MCF 10A (cell line): ENCODE measurements at regions of chr1 and their contacts with region 1.

Region 1: GRCh38 chr1:236281654-236282424 is at the start of gene ERO1B:
- DNase-seq: peak; percentile 100
- H3K4me3 Mint-ChIP-seq: peak within 1 kb of the TSS; percentile 80
- H3K27ac Mint-ChIP-seq: peak within 1 kb of the TSS; percentile 24
- H3K4me1 Mint-ChIP-seq: peaks cover 23% of the 10 kb centered on the region
- H3K27me3 Mint-ChIP-seq: peaks cover 26% of the 10 kb centered on the region
- CTCF ChIP-seq: no peak
- total RNA-seq, gene ERO1B: 9.6 and 17.2 TPM in 2 replicates

Region 2: DNA sequence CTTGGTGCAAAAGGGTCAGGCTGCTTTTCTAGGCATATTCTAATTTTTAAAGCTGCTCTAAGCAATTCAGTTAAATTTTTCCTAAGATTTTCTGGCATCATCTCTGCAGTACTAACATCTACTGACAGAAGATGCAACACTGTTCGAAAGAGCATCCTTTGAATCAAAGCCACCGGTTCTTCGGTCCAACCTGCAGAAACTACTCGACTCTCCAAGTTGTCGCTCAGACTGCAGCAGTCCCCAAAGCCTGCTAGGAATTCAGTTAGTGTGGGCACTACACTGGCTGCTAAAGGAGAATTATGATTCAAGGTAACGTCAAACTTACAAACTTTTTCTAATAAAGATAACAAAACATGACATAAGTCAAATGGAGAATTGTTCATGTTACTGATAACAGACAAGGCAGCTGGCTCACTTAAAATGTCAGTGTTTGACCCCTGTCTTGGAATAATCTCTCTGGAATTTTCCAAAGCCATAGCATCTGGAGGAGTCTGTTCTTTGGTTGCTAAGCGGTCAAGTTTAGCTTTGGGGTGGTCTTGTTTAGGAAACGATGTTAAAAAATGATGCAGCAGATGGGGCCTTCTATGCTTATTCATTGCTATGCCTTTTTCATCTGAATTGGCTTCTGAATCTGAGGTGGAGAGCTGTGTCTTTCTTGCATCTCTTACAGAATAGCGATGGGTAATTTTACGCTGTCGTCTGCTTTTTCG is 472.0 kb before region 1 on chr1:
- CTCF ChIA-PET with region 1: no interaction called
- POLR2A ChIA-PET with region 1: no interaction called
- intact Hi-C with region 1: no loop called
- DNase-seq: no peak
- H3K4me3 Mint-ChIP-seq: no peak overlapping the region
- H3K27ac Mint-ChIP-seq: no peak overlapping the region
- H3K4me1 Mint-ChIP-seq: no peaks in the 10 kb centered on the region
- H3K27me3 Mint-ChIP-seq: no peaks in the 10 kb centered on the region
- CTCF ChIP-seq: no peak

Region 3: DNA sequence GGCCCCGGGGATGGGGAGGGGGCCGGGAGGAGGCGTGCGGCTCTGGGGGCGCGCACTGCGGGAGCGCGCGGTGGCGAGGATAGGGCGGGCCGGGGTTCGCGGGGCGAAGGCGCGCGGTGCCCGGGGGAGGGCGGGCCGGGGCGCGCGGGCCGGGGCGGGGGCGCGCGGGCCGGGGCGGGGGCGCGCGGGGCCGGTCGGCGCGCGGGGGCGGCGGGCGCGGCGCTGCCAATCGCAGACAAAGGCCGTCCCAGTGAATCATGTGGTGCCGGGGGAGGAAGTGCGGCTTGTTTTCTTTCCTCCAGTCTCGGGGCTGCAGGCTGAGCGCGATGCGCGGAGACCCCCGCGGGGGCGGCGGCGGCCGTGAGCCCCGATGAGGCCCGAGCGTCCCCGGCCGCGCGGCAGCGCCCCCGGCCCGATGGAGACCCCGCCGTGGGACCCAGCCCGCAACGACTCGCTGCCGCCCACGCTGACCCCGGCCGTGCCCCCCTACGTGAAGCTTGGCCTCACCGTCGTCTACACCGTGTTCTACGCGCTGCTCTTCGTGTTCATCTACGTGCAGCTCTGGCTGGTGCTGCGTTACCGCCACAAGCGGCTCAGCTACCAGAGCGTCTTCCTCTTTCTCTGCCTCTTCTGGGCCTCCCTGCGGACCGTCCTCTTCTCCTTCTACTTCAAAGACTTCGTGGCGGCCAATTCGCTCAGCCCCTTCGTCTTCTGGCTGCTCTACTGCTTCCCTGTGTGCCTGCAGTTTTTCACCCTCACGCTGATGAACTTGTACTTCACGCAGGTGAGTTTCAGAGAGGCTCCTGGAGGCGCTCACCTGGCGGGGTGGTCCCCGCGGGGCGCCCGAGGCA is 139.4 kb before region 1 on chr1 and contains the start of gene GPR137B:
- CTCF ChIA-PET with region 1: no interaction called
- POLR2A ChIA-PET with region 1: interaction called, 8 read pairs
- intact Hi-C with region 1: loop called (anchors 2 kb)
- DNase-seq: peak; percentile 69
- H3K4me3 Mint-ChIP-seq: peak within 1 kb of the TSS; percentile 77
- H3K27ac Mint-ChIP-seq: peak within 1 kb of the TSS; percentile 10
- H3K4me1 Mint-ChIP-seq: peaks cover 19% of the 10 kb centered on the region
- H3K27me3 Mint-ChIP-seq: peaks cover 42% of the 10 kb centered on the region
- CTCF ChIP-seq: no peak
- total RNA-seq, gene GPR137B: 8.4 and 15.0 TPM in 2 replicates

Region 4: DNA sequence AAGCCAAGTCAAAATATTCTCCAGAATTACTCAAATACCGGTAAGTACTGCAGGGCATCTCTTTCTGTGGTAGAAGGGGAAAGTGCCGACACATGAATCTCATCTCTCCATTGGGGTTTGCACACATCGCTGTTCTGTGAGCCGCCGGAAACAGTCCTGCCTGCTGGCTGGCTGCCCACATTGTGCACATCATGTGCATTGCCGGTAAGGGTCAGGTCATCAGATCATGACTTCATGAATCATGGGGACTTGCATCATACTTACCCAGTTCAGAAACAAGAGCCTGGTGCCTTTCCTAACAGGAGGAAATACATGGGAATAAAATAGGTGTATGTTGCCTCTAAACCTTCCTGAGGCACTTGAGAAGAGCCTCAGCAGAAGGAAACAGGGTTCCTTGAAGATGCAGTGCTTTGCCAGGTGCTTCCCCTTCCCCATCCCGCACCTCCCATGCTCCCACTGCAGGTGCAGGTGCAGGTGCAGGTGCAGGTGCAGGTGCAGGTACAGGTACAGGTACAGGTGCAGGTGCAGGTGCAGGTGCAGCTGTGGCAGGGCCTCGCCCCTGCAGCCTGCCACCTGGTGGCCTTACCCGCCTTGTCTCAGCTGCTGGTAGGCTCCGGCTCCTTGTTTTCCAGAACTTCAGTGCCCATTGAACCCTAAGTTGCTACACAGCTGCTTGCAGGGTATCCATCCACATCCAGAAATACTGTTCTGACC is 113.0 kb before region 1 on chr1:
- CTCF ChIA-PET with region 1: no interaction called
- POLR2A ChIA-PET with region 1: interaction called, 4 read pairs
- intact Hi-C with region 1: loop called (anchors 5 kb)
- DNase-seq: peak; percentile 99
- H3K4me3 Mint-ChIP-seq: no peak overlapping the region
- H3K27ac Mint-ChIP-seq: peak overlapping the region; percentile 34
- H3K4me1 Mint-ChIP-seq: peaks cover 7% of the 10 kb centered on the region
- H3K27me3 Mint-ChIP-seq: no peaks in the 10 kb centered on the region
- CTCF ChIP-seq: peak; percentile 25

Region 5: GRCh38 chr1:236516929-236517704 is 235.3 kb after region 1 on chr1:
- CTCF ChIA-PET with region 1: no interaction called
- POLR2A ChIA-PET with region 1: interaction called, 4 read pairs
- intact Hi-C with region 1: loop called (anchors 2 kb)
- DNase-seq: peak; percentile 76
- H3K4me3 Mint-ChIP-seq: peak overlapping the region; percentile 37
- H3K27ac Mint-ChIP-seq: peak overlapping the region; percentile 68
- H3K4me1 Mint-ChIP-seq: peaks cover 19% of the 10 kb centered on the region
- H3K27me3 Mint-ChIP-seq: no peaks in the 10 kb centered on the region
- CTCF ChIP-seq: no peak